Naive thymus-derived CD8-positive, alpha-beta T cell (primary cell): ENCODE measurements at regions of chr10 and their contacts with region 1.

Region 1: DNA sequence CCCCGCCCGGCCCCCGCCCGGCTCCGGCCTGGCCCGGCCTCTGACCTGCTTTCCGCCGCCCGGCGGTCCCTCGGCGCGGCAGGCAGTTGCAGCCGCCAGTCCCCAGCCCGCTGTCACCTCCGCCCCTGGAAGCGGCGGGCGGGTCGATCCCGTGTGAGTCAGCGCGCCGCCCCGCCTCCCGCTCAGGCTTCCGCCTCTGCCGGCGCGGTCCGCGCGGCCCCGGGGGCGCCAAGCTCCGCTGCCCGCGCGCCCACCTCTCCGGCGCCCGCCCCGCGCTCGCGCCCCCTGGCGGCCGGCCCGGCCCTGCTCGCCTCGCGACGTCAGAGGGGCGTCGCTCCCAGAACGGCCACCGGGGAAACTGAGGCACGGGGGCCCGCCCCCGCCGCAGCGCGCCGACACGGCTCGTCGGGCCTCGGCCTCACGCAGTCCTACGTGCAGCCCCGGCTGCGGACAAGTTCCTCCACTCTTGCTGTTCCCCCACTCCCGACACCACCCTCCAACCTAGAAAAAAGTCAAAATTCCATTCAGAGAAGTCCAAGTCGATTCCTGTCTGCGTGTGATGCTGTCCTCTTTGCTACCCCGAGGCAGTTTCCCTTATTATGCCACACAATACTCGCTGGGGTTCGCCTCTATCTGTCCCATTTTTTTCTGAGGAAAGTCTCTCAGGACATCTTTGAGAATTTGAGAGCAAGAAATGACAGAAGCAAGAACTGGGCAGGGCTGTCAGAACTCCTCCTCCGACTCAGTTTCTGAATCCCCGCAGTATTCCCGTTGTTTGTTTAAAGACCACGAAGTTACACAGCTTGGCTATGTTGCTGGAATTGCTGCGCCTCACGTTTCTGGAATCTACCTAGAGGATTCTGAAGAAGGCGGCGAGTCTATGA is at the start of gene DNMBP:
- DNase-seq: peak; percentile 71 to 87 (median 82)
- ATAC-seq: peak; percentile 95 to 96
- H3K4me3 Mint-ChIP-seq: peak within 1 kb of the TSS; percentile 86 to 96 (median 93)
- H3K27ac Mint-ChIP-seq: peak within 1 kb of the TSS; percentile 70 to 96 (median 82)
- H3K4me1 Mint-ChIP-seq: peaks cover 13 to 63% (median 41%) of the 10 kb centered on the region in 4 donors
- H3K27me3 Mint-ChIP-seq: no peaks in the 10 kb centered on the region
- polyA plus RNA-seq, gene DNMBP: 0.59 to 1.6 (median 1.1) TPM

Region 2: GRCh38 chr10:99845837-99846382 is 164.1 kb before region 1 on chr10:
- POLR2A ChIA-PET with region 1: interaction called, 16 read pairs
- DNase-seq: peak; percentile 31 to 87 (median 68)
- ATAC-seq: peak; percentile 92 to 98
- H3K4me3 Mint-ChIP-seq: peak overlapping the region; percentile 13 to 69 (median 56)
- H3K27ac Mint-ChIP-seq: peak overlapping the region in 3 of 10 donors; percentile 33 to 51 (median 35)
- H3K4me1 Mint-ChIP-seq: peaks cover 4 to 11% (median 8%) of the 10 kb centered on the region in 4 donors
- H3K27me3 Mint-ChIP-seq: no peaks in the 10 kb centered on the region